Activated T-helper 2 cell treated with anti-CD3 and anti-CD28 coated beads, Interferon-gamma antibody, Interleukin-2, Interleukin-4, amounts not matched to agents 10 μg/mL and 5 μg/mL and 100 μg/mL, durations not matched to agents 14 hours and 24 hours and 36 hours (primary cell): ENCODE measurements at regions of chr11 and their contacts with region 1.

Region 1: GRCh38 chr11:65859200-65859811 is 927 bp upstream of the MUS81 start:
- DNase-seq: peak; percentile 98
- H3K4me3 Mint-ChIP-seq: peak overlapping the region; percentile 94
- H3K27ac Mint-ChIP-seq: peak overlapping the region; percentile 97
- H3K4me1 Mint-ChIP-seq: peaks cover 34% of the 10 kb centered on the region
- H3K27me3 Mint-ChIP-seq: no peaks in the 10 kb centered on the region

Region 2: DNA sequence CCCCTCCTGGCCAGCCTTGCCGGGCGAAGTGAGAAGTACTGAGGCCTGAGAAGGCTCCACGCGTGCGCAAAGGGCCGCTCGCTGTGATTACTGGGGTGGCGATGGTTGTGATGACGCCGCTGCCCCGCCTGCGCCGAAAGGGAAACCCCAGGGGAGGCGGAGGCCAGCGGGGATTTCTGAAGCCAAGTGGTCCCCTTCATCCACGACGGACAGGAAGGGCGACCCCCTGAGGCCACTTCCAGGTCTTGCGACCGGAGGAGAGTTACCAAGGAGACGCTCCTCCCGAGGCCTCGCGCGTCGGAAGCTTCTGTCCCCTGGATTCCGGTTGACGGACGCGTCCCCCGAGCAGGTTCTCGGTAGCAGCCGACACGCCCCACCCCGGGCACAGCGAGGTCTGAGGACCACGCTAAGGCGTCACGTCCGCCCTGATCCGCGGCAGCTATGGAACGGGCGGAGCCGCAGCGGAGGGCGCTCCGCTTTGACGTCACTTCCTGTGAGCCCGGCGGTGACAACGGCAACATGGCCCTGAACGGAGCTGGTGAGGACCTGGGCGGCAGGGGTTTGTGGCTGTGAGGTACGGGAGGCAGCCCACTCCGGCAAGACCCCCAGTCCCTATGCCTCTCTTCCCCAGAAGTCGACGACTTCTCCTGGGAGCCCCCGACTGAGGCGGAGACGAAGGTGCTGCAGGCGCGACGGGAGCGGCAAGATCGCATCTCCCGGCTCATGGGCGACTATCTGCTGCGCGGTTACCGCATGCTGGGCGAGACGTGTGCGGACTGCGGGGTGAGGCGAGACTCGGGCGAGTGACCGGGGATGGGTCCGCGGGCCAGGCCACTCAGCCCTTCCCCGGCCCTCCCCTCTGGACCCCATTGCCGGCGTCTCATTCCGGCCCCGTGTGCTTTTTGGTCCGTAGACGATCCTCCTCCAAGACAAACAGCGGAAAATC is 289.1 kb before region 1 on chr11 and contains the start of gene ZNRD2:
- intact Hi-C with region 1: loop called (anchors 10 kb)
- DNase-seq: peak; percentile 99
- H3K4me3 Mint-ChIP-seq: peak within 1 kb of the TSS; percentile 97
- H3K27ac Mint-ChIP-seq: peak within 1 kb of the TSS; percentile 98
- H3K4me1 Mint-ChIP-seq: peaks cover 57% of the 10 kb centered on the region
- H3K27me3 Mint-ChIP-seq: no peaks in the 10 kb centered on the region
- total RNA-seq, gene ZNRD2: 63.6 and 63.8 TPM in 2 replicates

Region 3: DNA sequence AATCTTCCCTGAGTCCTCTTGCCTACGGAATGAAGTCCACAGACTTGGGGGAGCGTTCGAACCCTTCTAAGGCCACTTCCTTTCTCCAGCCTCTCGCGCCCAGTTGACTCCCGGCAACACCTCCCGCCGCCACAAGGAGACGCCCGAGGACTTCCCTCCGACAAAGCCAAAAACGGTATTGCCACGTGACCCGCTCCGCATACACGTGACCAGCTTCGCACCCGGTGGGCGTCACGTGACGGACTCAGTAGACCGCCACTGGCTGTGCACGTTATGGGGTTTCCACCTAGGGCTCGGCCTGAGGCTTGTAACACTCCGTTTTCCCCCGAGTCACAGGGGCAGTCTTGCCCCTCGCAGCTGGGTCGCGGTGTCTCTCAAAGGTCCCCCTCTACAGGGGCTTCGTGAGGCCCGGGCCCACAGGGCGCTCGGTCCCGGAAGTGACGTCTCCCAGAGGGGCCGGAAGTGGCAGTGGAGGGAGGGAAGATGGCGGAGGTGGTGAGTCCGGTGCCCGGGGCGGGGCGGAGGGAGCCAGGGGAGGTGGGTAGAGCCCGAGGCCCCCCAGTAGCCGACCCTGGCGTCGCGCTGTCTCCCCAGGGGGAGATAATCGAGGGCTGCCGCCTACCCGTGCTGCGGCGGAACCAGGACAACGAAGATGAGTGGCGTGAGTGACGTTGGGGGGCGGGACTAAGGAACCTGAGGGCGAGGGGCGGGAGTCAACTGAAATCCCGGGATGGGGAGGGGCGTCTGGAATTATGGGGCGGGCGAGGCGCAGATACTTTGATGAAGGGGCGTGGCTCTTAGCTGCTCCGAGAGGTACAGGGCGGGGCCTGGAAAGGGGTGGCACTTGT is 147.3 kb before region 1 on chr11 and contains the start of gene KAT5:
- intact Hi-C with region 1: loop called (anchors 2 kb)
- DNase-seq: peak; percentile 99
- H3K4me3 Mint-ChIP-seq: peak within 1 kb of the TSS; percentile 89
- H3K27ac Mint-ChIP-seq: peak within 1 kb of the TSS; percentile 91
- H3K4me1 Mint-ChIP-seq: peaks cover 25% of the 10 kb centered on the region
- H3K27me3 Mint-ChIP-seq: no peaks in the 10 kb centered on the region
- total RNA-seq, gene KAT5: 76.3 and 79.4 TPM in 2 replicates

Region 4: GRCh38 chr11:65842144-65842543 is 17.2 kb before region 1 on chr11:
- intact Hi-C with region 1: no loop called
- DNase-seq: no peak
- H3K4me3 Mint-ChIP-seq: no peak overlapping the region
- H3K27ac Mint-ChIP-seq: no peak overlapping the region
- H3K4me1 Mint-ChIP-seq: no peaks in the 10 kb centered on the region
- H3K27me3 Mint-ChIP-seq: no peaks in the 10 kb centered on the region

Region 5: DNA sequence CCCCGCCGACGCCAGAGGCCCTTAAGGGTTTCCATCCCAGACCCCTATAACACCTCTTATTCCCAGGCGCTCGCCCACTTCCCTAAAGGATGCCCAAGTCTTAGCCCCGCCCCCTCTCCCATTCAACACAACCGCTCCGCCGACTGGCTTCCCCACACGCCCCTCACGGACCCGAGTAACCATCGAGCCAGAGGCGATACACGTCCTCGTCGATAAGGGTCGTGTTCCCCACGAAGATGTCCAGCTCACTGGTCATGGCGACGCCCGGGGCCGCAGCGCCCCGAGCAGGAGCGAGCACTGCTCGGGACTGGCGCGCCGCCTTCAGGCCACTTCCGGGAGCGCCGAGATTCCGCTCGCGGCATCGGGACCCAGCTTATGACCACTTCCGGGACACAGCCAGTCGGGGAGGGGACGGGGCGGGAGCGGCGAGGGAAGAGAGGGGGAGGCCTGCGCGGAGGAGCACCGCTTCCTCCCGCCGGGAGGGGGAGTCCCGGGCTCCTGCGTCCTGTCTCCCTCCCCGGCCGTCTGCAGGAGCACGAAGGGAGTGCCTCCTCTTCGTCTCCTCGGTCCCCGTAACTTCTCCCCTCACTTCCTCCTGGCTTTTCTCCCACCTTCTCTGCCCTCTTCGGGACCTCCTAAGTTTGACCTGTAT is 29.0 kb after region 1 on chr11 and contains the start of gene FIBP:
- intact Hi-C with region 1: loop called (anchors 1 kb)
- DNase-seq: peak; percentile 91
- H3K4me3 Mint-ChIP-seq: peak within 1 kb of the TSS; percentile 98
- H3K27ac Mint-ChIP-seq: peak within 1 kb of the TSS; percentile 92
- H3K4me1 Mint-ChIP-seq: peaks cover 47% of the 10 kb centered on the region
- H3K27me3 Mint-ChIP-seq: no peaks in the 10 kb centered on the region
- total RNA-seq, gene FIBP: 95.4 and 99.8 TPM in 2 replicates

Region 6: GRCh38 chr11:65988791-65989592 is 129.7 kb after region 1 on chr11:
- intact Hi-C with region 1: loop called (anchors 1 kb)
- DNase-seq: peak; percentile 89
- H3K4me3 Mint-ChIP-seq: no peak overlapping the region
- H3K27ac Mint-ChIP-seq: peak overlapping the region; percentile 85
- H3K4me1 Mint-ChIP-seq: peaks cover 5% of the 10 kb centered on the region
- H3K27me3 Mint-ChIP-seq: no peaks in the 10 kb centered on the region

Region 7: GRCh38 chr11:66051766-66052663 is 192.7 kb after region 1 on chr11 and contains the start of gene SF3B2:
- intact Hi-C with region 1: loop called (anchors 1 kb)
- DNase-seq: peak; percentile 97
- H3K4me3 Mint-ChIP-seq: peak within 1 kb of the TSS; percentile 100
- H3K27ac Mint-ChIP-seq: peak within 1 kb of the TSS; percentile 97
- H3K4me1 Mint-ChIP-seq: peaks cover 28% of the 10 kb centered on the region
- H3K27me3 Mint-ChIP-seq: peaks cover 5% of the 10 kb centered on the region
- total RNA-seq, gene SF3B2: 252 and 268 TPM in 2 replicates

Region 8: GRCh38 chr11:66344550-66345315 is 485.4 kb after region 1 on chr11 and contains the start of gene BRMS1:
- intact Hi-C with region 1: no loop called
- DNase-seq: peak; percentile 93
- H3K4me3 Mint-ChIP-seq: peak within 1 kb of the TSS; percentile 93
- H3K27ac Mint-ChIP-seq: peak within 1 kb of the TSS; percentile 91
- H3K4me1 Mint-ChIP-seq: peaks cover 32% of the 10 kb centered on the region
- H3K27me3 Mint-ChIP-seq: no peaks in the 10 kb centered on the region
- total RNA-seq, gene BRMS1: 45.1 and 46.0 TPM in 2 replicates